Calu3 (cell line): ENCODE measurements at regions of chr11 and their contacts with region 1.

Region 1: GRCh38 chr11:83836883-83837654 is 550.9 kb upstream of the CCDC90B start:
- DNase-seq: peak; percentile 19
- H3K4me3 Mint-ChIP-seq: no peak overlapping the region
- H3K27ac Mint-ChIP-seq: no peak overlapping the region
- H3K4me1 Mint-ChIP-seq: peaks cover 11% of the 10 kb centered on the region
- H3K27me3 Mint-ChIP-seq: peaks cover 19% of the 10 kb centered on the region
- CTCF ChIP-seq: peak; percentile 61

Region 2: DNA sequence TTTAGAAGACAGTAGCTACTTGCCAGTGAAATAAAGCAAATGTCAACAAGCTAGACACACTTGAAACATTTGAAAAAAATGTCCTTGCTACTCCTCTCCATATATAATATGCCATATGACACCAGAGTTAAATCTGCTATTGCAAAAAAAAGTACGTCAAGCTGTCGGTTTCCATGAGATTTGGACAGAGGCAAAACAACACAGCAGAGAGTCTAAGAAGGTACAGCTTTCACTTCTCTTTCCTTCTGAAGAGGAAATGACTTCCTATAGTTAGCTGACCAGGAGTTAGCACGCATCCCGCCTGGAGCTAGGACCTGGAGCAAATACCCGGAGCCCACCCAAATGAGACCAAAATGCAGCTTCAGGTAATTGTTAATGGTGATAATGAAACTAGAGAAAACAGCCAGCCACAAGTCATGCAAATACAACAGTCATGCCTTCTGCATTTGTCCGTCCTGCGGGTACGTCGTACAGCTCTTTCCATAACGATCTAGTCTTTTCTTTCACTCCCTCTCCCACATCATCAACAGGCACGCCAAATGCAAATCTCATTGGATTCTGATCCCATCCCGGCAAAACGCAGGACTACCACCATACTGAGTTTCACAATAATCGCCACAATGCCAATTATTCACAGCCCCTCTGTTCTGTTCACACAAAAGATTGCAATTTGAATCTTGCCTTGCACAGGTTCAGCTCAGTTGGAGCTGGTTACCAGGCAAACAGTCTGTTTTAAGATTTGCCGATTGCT is 155.9 kb before region 1 on chr11:
- CTCF ChIA-PET with region 1: no interaction called
- intact Hi-C with region 1: no loop called
- DNase-seq: no peak
- H3K4me3 Mint-ChIP-seq: no peak overlapping the region
- H3K27ac Mint-ChIP-seq: no peak overlapping the region
- H3K4me1 Mint-ChIP-seq: no peaks in the 10 kb centered on the region
- H3K27me3 Mint-ChIP-seq: peaks cover 34% of the 10 kb centered on the region
- CTCF ChIP-seq: no peak

Region 3: DNA sequence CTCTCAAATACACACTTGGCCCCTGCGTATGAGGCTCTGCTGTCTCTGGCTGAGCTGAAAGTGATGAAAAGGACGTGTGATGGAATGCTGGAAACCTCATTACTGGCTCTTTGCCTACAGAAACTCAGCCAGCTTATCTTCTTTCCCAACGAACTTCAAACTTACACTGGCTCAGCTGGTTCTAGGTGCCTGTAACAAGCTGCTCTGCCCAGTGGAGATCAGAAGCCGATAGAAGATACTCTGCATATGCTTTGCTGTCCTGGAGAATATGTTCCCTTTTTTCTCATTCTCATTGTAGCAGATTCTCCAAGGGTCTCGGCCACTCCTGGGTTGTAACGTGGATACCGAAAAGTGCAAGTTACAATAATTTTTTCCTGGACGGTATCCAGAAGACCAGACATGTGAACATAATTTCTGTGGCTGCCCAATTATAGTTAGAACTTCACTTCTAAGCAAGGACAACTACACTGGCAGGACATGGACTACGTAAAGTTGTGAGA is 145.6 kb before region 1 on chr11:
- CTCF ChIA-PET with region 1: no interaction called
- intact Hi-C with region 1: no loop called
- DNase-seq: no peak
- H3K4me3 Mint-ChIP-seq: no peak overlapping the region
- H3K27ac Mint-ChIP-seq: no peak overlapping the region
- H3K4me1 Mint-ChIP-seq: no peaks in the 10 kb centered on the region
- H3K27me3 Mint-ChIP-seq: peaks cover 13% of the 10 kb centered on the region
- CTCF ChIP-seq: no peak

Region 4: GRCh38 chr11:84089072-84090057 is 252.3 kb after region 1 on chr11:
- CTCF ChIA-PET with region 1: no interaction called
- intact Hi-C with region 1: no loop called
- DNase-seq: no peak
- H3K4me3 Mint-ChIP-seq: no peak overlapping the region
- H3K27ac Mint-ChIP-seq: no peak overlapping the region
- H3K4me1 Mint-ChIP-seq: no peaks in the 10 kb centered on the region
- H3K27me3 Mint-ChIP-seq: no peaks in the 10 kb centered on the region
- CTCF ChIP-seq: no peak

Region 5: DNA sequence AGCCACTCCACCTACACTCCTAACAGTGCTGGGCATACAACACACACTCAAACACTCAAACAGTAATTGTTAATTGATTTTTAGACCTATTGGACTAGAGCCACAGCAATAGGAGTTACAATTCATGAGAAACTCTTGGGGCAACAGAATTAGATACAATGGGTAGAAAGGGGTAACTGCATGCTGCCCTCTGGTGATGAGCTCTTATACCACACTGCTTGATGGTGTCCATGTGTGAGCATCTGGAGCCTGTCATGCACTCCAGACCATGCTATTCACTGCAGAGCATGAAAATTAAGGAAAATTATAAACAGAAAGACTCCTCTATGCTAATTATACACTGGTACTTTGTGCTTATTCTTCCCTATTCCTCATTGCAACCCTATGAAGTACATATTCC is 424.6 kb after region 1 on chr11:
- CTCF ChIA-PET with region 1: interaction called, 4 read pairs
- intact Hi-C with region 1: loop called (anchors 5 kb)
- DNase-seq: no peak
- H3K4me3 Mint-ChIP-seq: no peak overlapping the region
- H3K27ac Mint-ChIP-seq: no peak overlapping the region
- H3K4me1 Mint-ChIP-seq: no peaks in the 10 kb centered on the region
- H3K27me3 Mint-ChIP-seq: peaks cover 3% of the 10 kb centered on the region
- CTCF ChIP-seq: no peak

Region 6: GRCh38 chr11:84384731-84385130 is 547.7 kb after region 1 on chr11:
- CTCF ChIA-PET with region 1: interaction called, 3 read pairs
- intact Hi-C with region 1: loop called (anchors 5 kb)
- DNase-seq: peak; percentile 32
- H3K4me3 Mint-ChIP-seq: no peak overlapping the region
- H3K27ac Mint-ChIP-seq: no peak overlapping the region
- H3K4me1 Mint-ChIP-seq: no peaks in the 10 kb centered on the region
- H3K27me3 Mint-ChIP-seq: no peaks in the 10 kb centered on the region
- CTCF ChIP-seq: peak; percentile 36